CD8-positive, alpha-beta T cell (primary cell): ENCODE measurements at regions of chr19 and their contacts with region 1.

Region 1: DNA sequence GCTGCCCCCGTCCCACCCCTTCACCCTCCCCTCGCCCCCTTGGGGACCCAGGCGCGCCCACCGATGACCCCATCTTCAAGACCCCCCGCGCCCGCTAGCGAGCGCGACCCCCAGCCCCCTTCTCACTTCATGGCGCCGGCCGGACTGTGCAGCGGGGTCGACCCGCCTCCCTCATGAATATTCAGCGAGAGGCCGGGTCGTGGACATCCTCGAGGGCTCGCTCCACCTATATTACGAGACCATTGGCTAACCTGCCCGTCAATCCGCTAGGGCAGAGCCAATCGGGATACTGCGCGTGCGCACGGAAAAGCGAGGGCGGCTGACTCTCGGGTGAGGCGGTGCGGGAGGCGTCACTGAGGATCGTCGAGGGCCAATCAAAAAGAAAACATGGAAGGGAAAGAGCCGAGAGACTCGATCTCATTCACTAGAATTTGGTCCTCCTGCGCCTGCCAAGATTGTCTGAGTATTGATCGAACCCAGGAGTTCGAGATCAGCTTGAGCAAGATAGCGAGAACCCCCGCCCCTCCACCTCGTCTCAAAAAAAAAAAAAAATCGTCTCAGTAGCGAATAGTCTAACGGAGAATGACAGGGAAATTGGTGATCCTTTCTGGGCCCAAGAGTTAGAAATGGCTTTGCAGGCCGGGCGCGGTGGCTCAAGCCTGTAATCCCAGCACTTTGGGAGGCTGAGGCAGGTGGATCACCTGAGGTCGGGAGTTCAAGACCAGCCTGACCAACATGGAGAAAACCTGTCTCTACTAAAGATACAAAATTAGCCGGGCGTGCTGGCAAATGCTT is at the start of gene ERCC2:
- DNase-seq: peak; percentile 99 to 100 (median 99)
- ATAC-seq: peak; percentile 99
- H3K4me3 ChIP-seq: peak within 1 kb of the TSS; percentile 84 to 89
- H3K4me3 Mint-ChIP-seq: peak within 1 kb of the TSS; percentile 95
- H3K27ac ChIP-seq: peak within 1 kb of the TSS; percentile 54 to 90
- H3K27ac Mint-ChIP-seq: peak within 1 kb of the TSS; percentile 99
- H3K4me1 ChIP-seq: peaks cover 7% of the 10 kb centered on the region
- H3K4me1 Mint-ChIP-seq: peaks cover 14% of the 10 kb centered on the region
- H3K27me3 ChIP-seq: no peaks in the 10 kb centered on the region
- H3K27me3 Mint-ChIP-seq: no peaks in the 10 kb centered on the region
- CTCF ChIP-seq: no peak
- total RNA-seq, gene ERCC2: 9.1 to 11.8 TPM

Region 2: DNA sequence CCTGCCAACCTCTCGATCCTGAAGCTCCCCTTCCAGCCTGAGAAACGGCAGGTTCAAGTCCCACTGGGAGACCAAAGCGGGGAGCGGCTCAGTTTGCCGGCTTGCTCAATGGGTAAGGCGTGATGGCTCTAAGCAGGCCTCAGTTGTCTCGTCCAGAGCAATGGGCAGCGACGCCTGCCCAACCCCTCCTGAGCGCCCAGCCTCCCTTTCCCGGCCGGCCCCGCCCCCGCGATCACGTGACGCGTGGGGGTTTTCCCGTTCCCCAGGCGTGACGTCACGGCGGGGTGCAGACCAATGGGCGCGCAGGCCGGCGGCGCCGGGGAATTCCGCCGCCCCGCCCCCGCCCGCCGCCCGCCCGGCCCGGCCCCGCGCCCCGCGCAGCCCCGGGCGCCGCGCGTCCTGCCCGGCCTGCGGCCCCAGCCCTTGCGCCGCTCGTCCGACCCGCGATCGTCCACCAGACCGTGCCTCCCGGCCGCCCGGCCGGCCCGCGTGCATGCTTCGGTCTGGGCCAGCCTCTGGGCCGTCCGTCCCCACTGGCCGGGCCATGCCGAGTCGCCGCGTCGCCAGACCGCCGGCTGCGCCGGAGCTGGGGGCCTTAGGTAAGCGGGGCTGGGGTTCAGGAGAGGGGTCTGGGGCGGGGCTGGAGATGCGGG is 369.4 kb before region 1 on chr19 and contains the start of gene RELB:
- CTCF ChIA-PET with region 1: no interaction called
- POLR2A ChIA-PET with region 1: no interaction called
- intact Hi-C with region 1: loop called in 1 of 2 experiments (anchors 2 kb)
- DNase-seq: peak; percentile 92 to 98 (median 95)
- ATAC-seq: peak; percentile 49
- H3K4me3 ChIP-seq: peak within 1 kb of the TSS; percentile 58 to 98
- H3K4me3 Mint-ChIP-seq: peak within 1 kb of the TSS; percentile 96
- H3K27ac ChIP-seq: peak within 1 kb of the TSS; percentile 98 to 100
- H3K27ac Mint-ChIP-seq: peak within 1 kb of the TSS; percentile 100
- H3K4me1 ChIP-seq: peaks cover 10% of the 10 kb centered on the region
- H3K4me1 Mint-ChIP-seq: peaks cover 16% of the 10 kb centered on the region
- H3K27me3 ChIP-seq: no peaks in the 10 kb centered on the region
- H3K27me3 Mint-ChIP-seq: no peaks in the 10 kb centered on the region
- CTCF ChIP-seq: no peak
- total RNA-seq, gene RELB: 168 to 179 TPM

Region 3: GRCh38 chr19:45340232-45340898 is 30.2 kb before region 1 on chr19 and contains the start of gene KLC3:
- CTCF ChIA-PET with region 1: no interaction called
- POLR2A ChIA-PET with region 1: no interaction called
- intact Hi-C with region 1: loop called in 1 of 2 experiments (anchors 2 kb)
- DNase-seq: peak in 6 of 9 experiments; percentile 14 to 58 (median 41)
- ATAC-seq: peak; percentile 54
- H3K4me3 ChIP-seq: peak within 1 kb of the TSS in 1 of 2 experiments; percentile 23
- H3K4me3 Mint-ChIP-seq: peak within 1 kb of the TSS; percentile 71
- H3K27ac ChIP-seq: no peak within 1 kb of the TSS
- H3K27ac Mint-ChIP-seq: no peak within 1 kb of the TSS
- H3K4me1 ChIP-seq: no peaks in the 10 kb centered on the region
- H3K4me1 Mint-ChIP-seq: peaks cover 6% of the 10 kb centered on the region
- H3K27me3 ChIP-seq: peaks cover 11 to 25% of the 10 kb centered on the region in 2 experiments
- H3K27me3 Mint-ChIP-seq: peaks cover 34% of the 10 kb centered on the region
- CTCF ChIP-seq: no peak
- total RNA-seq, gene KLC3: not detected

Region 4: DNA sequence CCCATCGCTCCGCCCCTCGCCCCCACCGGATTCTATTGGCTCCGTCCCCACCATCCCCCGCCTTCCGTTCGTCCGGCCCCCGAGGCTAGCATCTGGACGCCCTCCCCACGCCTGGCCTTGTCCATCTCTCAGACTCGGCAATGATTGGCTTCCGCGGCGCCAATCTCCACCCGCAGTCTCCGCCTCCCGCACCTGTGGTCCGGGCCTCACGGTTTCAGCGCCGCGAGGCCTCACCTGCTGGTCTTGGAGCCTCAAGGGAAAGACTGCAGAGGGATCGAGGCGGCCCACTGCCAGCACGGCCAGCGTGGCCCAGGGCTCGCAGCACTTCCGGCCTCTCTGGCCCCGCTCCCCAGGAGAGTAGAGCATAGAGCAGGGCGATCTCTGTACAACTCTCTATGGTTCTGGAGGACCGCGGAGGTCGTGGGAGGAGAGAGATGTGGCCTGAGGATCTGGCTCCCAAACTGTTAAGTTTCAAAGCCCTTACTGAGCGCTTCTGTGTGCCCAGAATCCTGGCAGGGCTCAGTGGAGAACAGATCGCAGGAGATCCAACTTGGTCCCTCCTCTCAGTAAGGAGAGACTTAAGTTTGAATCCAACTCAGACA is 53.1 kb after region 1 on chr19 and contains the start of gene ERCC1:
- CTCF ChIA-PET with region 1: interaction called, 3 read pairs
- POLR2A ChIA-PET with region 1: no interaction called
- intact Hi-C with region 1: loop called in 1 of 2 experiments (anchors 1 kb)
- DNase-seq: peak in 6 of 9 experiments; percentile 35 to 84 (median 48)
- ATAC-seq: peak; percentile 57
- H3K4me3 ChIP-seq: peak within 1 kb of the TSS; percentile 72 to 95
- H3K4me3 Mint-ChIP-seq: peak within 1 kb of the TSS; percentile 93
- H3K27ac ChIP-seq: peak within 1 kb of the TSS; percentile 48 to 88
- H3K27ac Mint-ChIP-seq: peak within 1 kb of the TSS; percentile 90
- H3K4me1 ChIP-seq: peaks cover 32% of the 10 kb centered on the region
- H3K4me1 Mint-ChIP-seq: peaks cover 55% of the 10 kb centered on the region
- H3K27me3 ChIP-seq: no peaks in the 10 kb centered on the region
- H3K27me3 Mint-ChIP-seq: peaks cover 2% of the 10 kb centered on the region
- CTCF ChIP-seq: no peak
- total RNA-seq, gene ERCC1: 28.7 to 31.5 TPM

Region 5: GRCh38 chr19:45770192-45771101 is 399.8 kb after region 1 on chr19:
- CTCF ChIA-PET with region 1: no interaction called
- POLR2A ChIA-PET with region 1: no interaction called
- intact Hi-C with region 1: loop called in 1 of 2 experiments (anchors 1 kb)
- DNase-seq: peak; percentile 79 to 94 (median 92)
- ATAC-seq: peak; percentile 74
- H3K4me3 ChIP-seq: peak overlapping the region; percentile 90 to 99
- H3K4me3 Mint-ChIP-seq: peak overlapping the region; percentile 84
- H3K27ac ChIP-seq: peak overlapping the region in 1 of 2 experiments; percentile 77
- H3K27ac Mint-ChIP-seq: peak overlapping the region; percentile 85
- H3K4me1 ChIP-seq: peaks cover 22% of the 10 kb centered on the region
- H3K4me1 Mint-ChIP-seq: peaks cover 24% of the 10 kb centered on the region
- H3K27me3 ChIP-seq: peaks cover 0 to 6% of the 10 kb centered on the region in 2 experiments
- H3K27me3 Mint-ChIP-seq: peaks cover 7% of the 10 kb centered on the region
- CTCF ChIP-seq: peak; percentile 99

Region 6: GRCh38 chr19:46346821-46347571 is 976.4 kb after region 1 on chr19 and contains the start of gene PPP5C:
- CTCF ChIA-PET with region 1: no interaction called
- POLR2A ChIA-PET with region 1: no interaction called
- intact Hi-C with region 1: loop called in 1 of 2 experiments (anchors 2 kb)
- DNase-seq: peak; percentile 63 to 92 (median 84)
- ATAC-seq: peak; percentile 85
- H3K4me3 ChIP-seq: peak within 1 kb of the TSS; percentile 97 to 99
- H3K4me3 Mint-ChIP-seq: peak within 1 kb of the TSS; percentile 95
- H3K27ac ChIP-seq: peak within 1 kb of the TSS; percentile 57 to 86
- H3K27ac Mint-ChIP-seq: peak within 1 kb of the TSS; percentile 92
- H3K4me1 ChIP-seq: peaks cover 51% of the 10 kb centered on the region
- H3K4me1 Mint-ChIP-seq: peaks cover 54% of the 10 kb centered on the region
- H3K27me3 ChIP-seq: no peaks in the 10 kb centered on the region
- H3K27me3 Mint-ChIP-seq: no peaks in the 10 kb centered on the region
- CTCF ChIP-seq: peak; percentile 61
- total RNA-seq, gene PPP5C: 24.6 to 25.7 TPM